ENCODE measurements at regions of chr10 and their contacts with region 1.

Region 1: DNA sequence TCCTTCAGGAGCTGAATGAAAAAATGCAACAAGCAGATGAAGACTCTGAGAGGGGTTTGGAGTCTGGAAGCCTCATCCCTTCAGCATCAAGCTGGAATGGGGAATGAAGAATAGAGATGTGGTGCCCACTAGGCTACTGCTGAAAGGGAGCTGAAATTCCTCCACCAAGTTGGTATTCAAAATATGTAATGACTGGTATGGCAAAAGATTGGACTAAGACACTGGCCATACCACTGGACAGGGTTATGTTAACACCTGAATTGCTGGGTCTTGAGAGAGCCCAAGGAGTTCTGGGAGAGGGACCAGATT is 5.4 kb downstream of the IFIT2 start:
- DNase-seq: no peak
- H3K4me3 ChIP-seq: no peak overlapping the region
- H3K27ac ChIP-seq: no peak overlapping the region
- H3K4me1 ChIP-seq: peaks cover 9% of the 10 kb centered on the region
- H3K27me3 ChIP-seq: no peaks in the 10 kb centered on the region
- CTCF ChIP-seq: no peak

Region 2: DNA sequence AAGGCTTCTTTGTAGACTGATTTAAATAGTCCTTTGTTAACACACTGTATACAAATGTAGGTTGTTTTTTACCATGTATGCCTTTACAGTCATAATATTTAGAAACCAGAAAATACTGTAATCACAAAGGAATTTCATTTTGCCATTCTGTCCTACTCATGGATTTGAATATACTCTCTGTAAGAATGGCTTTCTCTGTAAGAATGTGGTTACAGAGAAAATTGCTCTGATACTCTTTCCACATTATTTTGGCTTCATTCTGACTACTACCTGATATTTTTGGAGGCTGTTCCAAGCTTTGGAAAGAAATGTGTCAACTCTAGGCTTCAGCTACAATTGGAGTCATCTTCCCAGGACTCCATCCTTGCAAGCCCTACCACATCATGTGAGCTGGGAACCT is 123.7 kb before region 1 on chr10:
- CTCF ChIA-PET with region 1: no interaction called
- dilution Hi-C with region 1: no loop called
- in situ Hi-C with region 1: no loop called
- intact Hi-C with region 1: no loop called
- DNase-seq: peak; percentile 68
- H3K4me3 ChIP-seq: no peak overlapping the region
- H3K27ac ChIP-seq: no peak overlapping the region
- H3K4me1 ChIP-seq: no peaks in the 10 kb centered on the region
- H3K27me3 ChIP-seq: no peaks in the 10 kb centered on the region
- CTCF ChIP-seq: no peak

Region 3: DNA sequence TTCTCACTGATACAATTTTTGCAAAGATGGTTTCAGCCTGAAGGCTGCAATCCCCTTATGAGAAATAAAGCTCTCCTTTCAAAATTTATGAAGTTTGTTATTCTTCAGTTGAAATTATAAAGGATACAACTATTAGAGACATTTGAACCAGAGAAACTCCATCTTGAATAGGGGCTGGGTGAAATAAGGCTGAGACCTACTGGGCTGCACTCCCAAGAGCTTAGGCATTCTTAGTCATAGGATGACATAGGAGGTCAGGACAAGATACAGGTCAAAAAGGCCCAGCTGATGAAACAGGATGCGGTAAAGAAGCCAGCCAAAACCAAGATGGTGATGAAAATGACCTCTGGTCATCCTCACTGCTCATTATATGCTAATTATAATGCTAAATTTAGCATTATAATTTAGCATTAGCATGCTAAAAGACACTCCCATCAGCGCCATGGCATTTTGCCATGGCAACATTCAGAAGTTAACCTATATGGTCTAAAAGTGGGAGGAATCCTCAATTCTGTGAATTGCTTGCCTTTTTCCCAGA is 48.2 kb after region 1 on chr10:
- CTCF ChIA-PET with region 1: no interaction called
- dilution Hi-C with region 1: loop called (anchors 5 kb)
- in situ Hi-C with region 1: no loop called
- intact Hi-C with region 1: no loop called
- DNase-seq: peak; percentile 46
- H3K4me3 ChIP-seq: no peak overlapping the region
- H3K27ac ChIP-seq: no peak overlapping the region
- H3K4me1 ChIP-seq: peaks cover 6% of the 10 kb centered on the region
- H3K27me3 ChIP-seq: no peaks in the 10 kb centered on the region
- CTCF ChIP-seq: no peak